ENCODE measurements at regions of chr11 and their contacts with region 1.

Region 1: GRCh38 chr11:57085611-57086010 is 96.1 kb upstream of the LRRC55 start:
- DNase-seq: no peak
- CTCF ChIP-seq: no peak

Region 2: DNA sequence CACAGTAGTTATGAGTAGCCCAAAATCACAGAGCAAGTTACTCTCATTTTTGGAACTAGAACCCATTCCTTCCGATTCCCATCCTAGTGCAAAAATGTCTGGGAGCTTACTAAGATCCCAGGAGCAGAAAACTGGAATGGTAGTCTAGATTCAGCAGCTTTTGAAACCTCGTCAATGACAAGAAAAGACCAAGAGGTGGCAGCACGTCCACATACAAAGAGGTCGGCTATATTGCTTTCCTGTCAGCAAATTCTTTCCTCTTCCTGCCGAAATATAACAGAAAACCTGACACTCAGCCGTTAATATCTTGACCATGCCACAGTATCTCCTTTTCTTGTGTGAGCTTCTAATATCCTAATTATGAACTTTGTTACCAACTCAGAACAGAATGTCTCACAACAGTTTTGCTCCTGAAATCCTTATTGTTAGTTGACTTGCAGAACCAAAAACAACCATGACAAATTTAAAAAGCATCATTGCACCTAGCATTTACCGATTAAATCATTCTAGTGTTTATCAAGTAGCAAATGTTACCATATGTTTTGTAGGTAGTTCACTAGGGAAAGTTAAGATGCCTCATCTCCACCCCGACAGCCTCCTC is 244.3 kb before region 1 on chr11:
- in situ Hi-C with region 1: loop called (anchors 25 kb)
- DNase-seq: peak; percentile 30
- CTCF ChIP-seq: peak; percentile 56